ENCODE measurements at regions of chr6 and their contacts with region 1.

Region 1: DNA sequence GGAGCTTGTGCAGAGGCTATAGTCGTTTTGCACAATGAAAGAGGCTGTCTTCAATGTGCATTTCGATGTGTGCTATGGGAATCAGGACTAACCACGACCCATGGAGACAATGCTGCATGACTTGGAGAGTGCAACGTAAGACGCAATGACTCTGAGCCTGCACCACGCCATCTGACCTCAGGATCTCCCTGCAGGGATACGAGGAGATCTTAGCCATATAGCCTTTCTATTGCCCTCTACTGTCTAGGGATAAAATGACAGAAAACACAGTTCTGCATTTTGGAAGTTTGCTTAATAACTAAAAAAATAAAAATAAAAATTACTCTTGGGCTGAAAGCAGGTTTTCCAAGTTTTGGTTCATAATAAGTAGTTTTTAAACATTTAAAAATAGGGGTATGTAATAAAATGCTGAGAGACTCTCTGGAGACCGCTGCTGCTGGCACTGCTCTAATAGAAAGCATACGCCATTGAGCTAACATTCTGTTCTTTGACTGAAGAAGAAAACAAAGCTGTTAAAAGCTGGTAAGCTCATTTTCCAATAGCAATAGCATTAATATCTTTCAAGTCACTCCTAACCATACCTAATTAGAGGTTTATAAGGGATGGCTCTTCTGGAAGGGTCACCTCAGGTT is 87.2 kb downstream of the PDE7B start:
- DNase-seq: peak in 3 of 4 donors; percentile 13 to 16 (median 13)
- ATAC-seq: no peak
- H3K4me3 ChIP-seq: no peak overlapping the region
- H3K27ac ChIP-seq: no peak overlapping the region
- H3K4me1 ChIP-seq: no peaks in the 10 kb centered on the region
- H3K27me3 ChIP-seq: no peaks in the 10 kb centered on the region
- CTCF ChIP-seq: peak in 5 of 7 experiments; percentile 14 to 47 (median 37)
- POLR2A ChIP-seq: no peak

Region 2: DNA sequence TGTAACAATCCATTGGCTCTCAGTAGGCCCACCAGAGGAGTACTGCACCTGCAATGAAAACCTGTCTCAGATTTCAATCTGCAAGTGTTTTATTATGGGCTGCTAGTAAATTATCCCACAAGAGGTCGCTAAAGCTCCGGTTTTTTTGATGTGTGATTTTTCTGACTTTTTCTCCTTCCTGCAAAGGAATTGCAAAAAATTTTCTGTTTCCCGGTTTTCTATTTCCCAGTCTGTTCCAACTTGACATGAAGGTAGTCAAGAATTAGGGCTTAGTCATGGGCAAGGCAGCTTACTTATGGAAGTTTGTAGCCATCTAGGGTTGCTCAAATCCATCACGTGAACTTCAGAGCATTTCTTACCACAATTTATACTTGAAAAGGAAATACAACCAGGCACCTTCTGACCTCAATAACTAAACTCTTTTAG is 402.7 kb before region 1 on chr6:
- intact Hi-C with region 1: loop called (anchors 10 kb)
- DNase-seq: peak in 1 of 4 donors; percentile 34
- ATAC-seq: no peak
- H3K4me3 ChIP-seq: no peak overlapping the region
- H3K27ac ChIP-seq: no peak overlapping the region
- H3K4me1 ChIP-seq: no peaks in the 10 kb centered on the region
- H3K27me3 ChIP-seq: no peaks in the 10 kb centered on the region
- CTCF ChIP-seq: peak; percentile 19 to 77 (median 69)
- POLR2A ChIP-seq: no peak

Region 3: DNA sequence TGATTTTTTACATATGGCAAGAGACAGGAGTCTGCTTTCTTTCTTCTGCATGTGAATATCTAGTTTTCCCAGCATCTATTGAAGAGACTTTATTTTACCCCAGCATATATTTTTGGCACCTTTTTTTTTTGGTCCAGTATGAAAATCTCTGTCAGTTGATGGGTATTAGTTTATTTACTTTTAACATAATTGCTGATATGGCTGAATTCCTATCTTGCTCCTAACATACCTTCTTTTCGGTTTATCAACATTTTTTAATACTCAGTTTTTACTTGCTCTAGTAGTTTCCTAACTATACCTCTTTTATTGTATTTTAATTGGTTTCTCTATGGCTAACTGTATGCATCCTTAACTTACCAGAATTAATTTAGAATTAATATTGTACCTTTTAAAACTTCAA is 164.7 kb before region 1 on chr6:
- intact Hi-C with region 1: no loop called
- DNase-seq: no peak
- ATAC-seq: no peak
- H3K4me3 ChIP-seq: no peak overlapping the region
- H3K27ac ChIP-seq: no peak overlapping the region
- H3K4me1 ChIP-seq: no peaks in the 10 kb centered on the region
- H3K27me3 ChIP-seq: no peaks in the 10 kb centered on the region
- CTCF ChIP-seq: no peak
- POLR2A ChIP-seq: no peak

Measured in body of pancreas (tissue), 4 donors.